Left cardiac atrium (tissue), 4 donors: ENCODE measurements at regions of chr14 and their contacts with region 1.

Region 1: GRCh38 chr14:105554022-105554421 is 27.6 kb downstream of the TMEM121 start:
- DNase-seq: no peak
- ATAC-seq: no peak

Region 2: GRCh38 chr14:105430535-105430934 is 123.5 kb before region 1 on chr14:
- intact Hi-C with region 1: no loop called
- DNase-seq: no peak
- ATAC-seq: peak in 1 of 2 donors; percentile 42

Region 3: DNA sequence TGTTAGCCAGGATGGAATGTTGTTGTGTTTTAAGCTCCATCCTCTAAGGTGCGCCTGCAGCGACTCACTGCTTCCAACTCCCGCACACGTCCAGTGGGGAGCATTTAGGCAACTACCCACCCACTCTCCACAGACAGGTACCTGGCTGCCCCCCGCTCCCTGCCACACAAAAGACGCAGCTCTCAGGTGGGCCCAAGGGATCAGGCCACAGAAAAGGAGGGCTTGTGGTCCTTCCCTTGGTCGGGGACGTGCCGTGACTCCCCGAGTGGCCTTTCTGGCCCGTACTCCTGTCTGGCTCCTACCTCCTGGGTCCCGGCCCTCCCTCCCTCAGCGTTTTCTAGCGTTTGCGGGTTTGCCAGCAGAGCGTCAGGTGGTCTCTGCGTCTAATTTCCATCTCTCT is 46.8 kb before region 1 on chr14:
- intact Hi-C with region 1: no loop called
- DNase-seq: no peak
- ATAC-seq: no peak

Region 4: DNA sequence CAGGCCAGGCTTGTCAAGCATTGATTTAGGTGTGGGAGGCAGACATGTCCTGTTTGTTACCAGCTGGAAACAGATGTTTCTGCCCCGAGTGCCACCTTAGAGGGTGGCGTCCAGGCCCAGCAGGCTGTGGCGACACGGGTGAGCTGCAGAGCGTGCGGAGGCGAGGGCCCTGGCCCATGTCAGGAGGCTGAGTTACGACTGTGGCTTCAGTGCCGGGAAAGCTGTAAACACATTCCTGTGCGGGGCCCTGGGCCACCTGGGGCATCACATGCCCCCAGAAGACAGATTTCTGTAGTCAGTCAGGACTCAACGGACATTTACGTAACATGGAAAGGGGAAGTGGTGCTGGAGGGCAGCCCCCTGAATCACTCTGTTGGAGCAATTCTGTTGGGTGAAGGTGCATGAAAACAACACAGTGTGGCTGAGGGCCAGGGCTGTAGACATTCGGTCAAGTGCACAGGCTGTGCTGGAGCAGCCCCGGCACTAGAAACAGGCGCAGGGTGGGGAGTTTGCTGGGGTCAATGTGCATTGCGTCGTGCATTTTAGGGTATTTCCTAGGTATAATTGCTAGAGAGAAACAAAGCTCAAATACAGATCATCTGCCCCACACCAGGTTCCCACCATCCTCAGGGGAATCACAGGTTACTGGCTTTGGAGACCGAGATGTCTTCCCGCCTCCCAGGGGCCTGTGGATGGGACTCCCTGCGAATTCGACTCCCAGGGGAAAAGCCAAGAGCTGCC is 264.1 kb after region 1 on chr14:
- intact Hi-C with region 1: no loop called
- DNase-seq: no peak
- ATAC-seq: no peak

Region 5: GRCh38 chr14:106378191-106378590 is 824.2 kb after region 1 on chr14:
- intact Hi-C with region 1: loop called in 1 of 2 experiments (anchors 5 kb)
- DNase-seq: no peak
- ATAC-seq: no peak